ENCODE measurements at regions of chr2 and their contacts with region 1.

Region 1: GRCh38 chr2:122748552-122749011 is 993.1 kb downstream of the TSN start:
- DNase-seq: peak; percentile 63
- H3K4me3 ChIP-seq: no peak overlapping the region
- H3K27ac ChIP-seq: peak overlapping the region; percentile 81
- H3K4me1 ChIP-seq: peaks cover 11% of the 10 kb centered on the region
- H3K27me3 ChIP-seq: no peaks in the 10 kb centered on the region
- CTCF ChIP-seq: no peak
- POLR2A ChIP-seq: no peak

Region 2: GRCh38 chr2:121897335-121897970 is 851.1 kb before region 1 on chr2:
- CTCF ChIA-PET with region 1: no interaction called
- POLR2A ChIA-PET with region 1: no interaction called
- dilution Hi-C with region 1: no loop called
- intact Hi-C with region 1: loop called (anchors 5 kb)
- DNase-seq: peak; percentile 20
- H3K4me3 ChIP-seq: no peak overlapping the region
- H3K27ac ChIP-seq: peak overlapping the region; percentile 73
- H3K4me1 ChIP-seq: peaks cover 12% of the 10 kb centered on the region
- H3K27me3 ChIP-seq: no peaks in the 10 kb centered on the region
- CTCF ChIP-seq: peak; percentile 48 to 72
- POLR2A ChIP-seq: no peak

Region 3: DNA sequence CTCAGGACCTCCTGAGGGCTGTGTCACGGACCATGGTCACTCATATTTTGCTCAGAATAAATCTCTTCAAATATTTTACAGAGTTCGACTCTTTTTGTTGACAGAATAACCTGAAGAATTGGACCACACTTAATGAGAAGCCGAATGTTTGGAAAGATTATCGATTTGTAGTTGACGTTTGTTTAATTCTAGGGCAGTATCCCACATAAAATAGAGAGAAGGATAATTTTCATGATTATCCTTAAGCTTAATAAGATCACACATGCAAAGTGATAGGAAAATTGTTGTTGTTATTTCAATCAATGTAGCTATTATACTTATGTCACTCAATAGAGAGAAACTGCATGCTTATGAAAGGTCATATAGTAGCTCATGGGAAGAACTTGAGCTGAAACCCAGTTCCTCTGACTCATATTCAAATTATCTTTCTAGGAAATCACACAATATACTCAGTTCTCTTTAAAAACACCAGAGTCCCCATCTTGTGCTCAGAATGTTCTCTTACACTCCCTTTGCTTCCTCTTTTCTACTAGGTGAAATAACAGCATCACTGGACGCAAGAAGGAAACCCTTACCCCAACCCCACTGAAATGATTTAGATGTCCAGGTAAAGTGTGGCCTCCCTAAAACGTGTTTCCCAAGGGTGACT is 11.0 kb before region 1 on chr2:
- CTCF ChIA-PET with region 1: no interaction called
- POLR2A ChIA-PET with region 1: no interaction called
- dilution Hi-C with region 1: no loop called
- intact Hi-C with region 1: no loop called
- DNase-seq: peak; percentile 11
- H3K4me3 ChIP-seq: no peak overlapping the region
- H3K27ac ChIP-seq: no peak overlapping the region
- H3K4me1 ChIP-seq: no peaks in the 10 kb centered on the region
- H3K27me3 ChIP-seq: no peaks in the 10 kb centered on the region
- CTCF ChIP-seq: no peak
- POLR2A ChIP-seq: no peak